CD8-positive, alpha-beta T cell (primary cell): ENCODE measurements at regions of chr2 and their contacts with region 1.

Region 1: DNA sequence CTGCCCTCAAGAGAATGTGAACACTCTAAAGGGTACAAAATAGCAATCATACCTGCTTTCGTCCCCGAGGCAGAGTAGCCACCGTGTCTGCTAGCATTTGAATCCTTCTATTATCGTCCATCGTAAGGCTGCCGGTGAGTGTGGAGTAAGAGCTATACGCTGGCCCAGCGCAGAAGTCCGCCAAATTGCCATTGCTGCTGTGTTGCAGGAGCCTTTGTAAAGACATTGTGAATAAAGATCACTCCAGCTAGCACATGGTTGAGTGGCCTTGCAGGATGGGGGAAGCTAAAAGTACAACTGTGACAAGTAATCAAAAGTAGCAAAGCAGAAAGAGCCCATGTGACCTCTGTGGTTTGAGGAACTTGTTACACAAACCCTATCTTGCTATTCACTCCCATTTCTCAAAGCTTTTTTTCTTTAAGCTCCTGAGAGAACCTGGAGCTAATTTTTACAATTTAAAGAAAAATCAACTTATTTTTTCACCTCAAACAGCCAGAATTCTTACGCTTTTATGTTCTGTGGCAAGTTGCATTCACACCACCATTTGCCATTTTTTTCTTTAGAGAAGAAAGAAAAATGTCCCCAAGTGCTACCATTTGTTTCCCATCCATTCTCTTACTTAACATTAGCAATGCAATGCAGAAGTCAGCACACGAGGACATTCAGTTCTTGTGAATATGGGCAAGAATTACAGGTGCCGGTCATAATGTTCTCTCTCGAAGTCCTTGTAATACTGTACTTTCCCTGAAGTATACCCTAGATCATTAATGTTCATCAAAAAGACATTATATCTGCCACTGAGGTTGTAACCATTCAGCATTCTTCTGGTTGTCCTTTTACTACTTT is at the start of gene CYTIP:
- DNase-seq: peak in 7 of 9 experiments; percentile 52 to 88 (median 64)
- ATAC-seq: peak; percentile 35
- H3K4me3 ChIP-seq: peak within 1 kb of the TSS; percentile 80 to 83
- H3K4me3 Mint-ChIP-seq: peak within 1 kb of the TSS; percentile 91
- H3K27ac ChIP-seq: peak within 1 kb of the TSS; percentile 88 to 92
- H3K27ac Mint-ChIP-seq: peak within 1 kb of the TSS; percentile 98
- H3K4me1 ChIP-seq: peaks cover 35% of the 10 kb centered on the region
- H3K4me1 Mint-ChIP-seq: peaks cover 46% of the 10 kb centered on the region
- H3K27me3 ChIP-seq: no peaks in the 10 kb centered on the region
- H3K27me3 Mint-ChIP-seq: no peaks in the 10 kb centered on the region
- CTCF ChIP-seq: no peak
- total RNA-seq, gene CYTIP: 425 to 430 TPM

Region 2: GRCh38 chr2:157363612-157364101 is 80.4 kb before region 1 on chr2:
- CTCF ChIA-PET with region 1: no interaction called
- POLR2A ChIA-PET with region 1: no interaction called
- intact Hi-C with region 1: no loop called
- DNase-seq: peak in 1 of 9 experiments; percentile 33
- ATAC-seq: no peak
- H3K4me3 ChIP-seq: no peak overlapping the region
- H3K4me3 Mint-ChIP-seq: peak overlapping the region; percentile 6
- H3K27ac ChIP-seq: peak overlapping the region in 1 of 2 experiments; percentile 34
- H3K27ac Mint-ChIP-seq: peak overlapping the region; percentile 29
- H3K4me1 ChIP-seq: peaks cover 29% of the 10 kb centered on the region
- H3K4me1 Mint-ChIP-seq: peaks cover 46% of the 10 kb centered on the region
- H3K27me3 ChIP-seq: no peaks in the 10 kb centered on the region
- H3K27me3 Mint-ChIP-seq: no peaks in the 10 kb centered on the region
- CTCF ChIP-seq: no peak

Region 3: GRCh38 chr2:157404363-157404762 is 39.7 kb before region 1 on chr2:
- CTCF ChIA-PET with region 1: interaction called, 15 read pairs
- POLR2A ChIA-PET with region 1: interaction called, 83 read pairs
- intact Hi-C with region 1: loop called (anchors 1 to 5 kb)
- DNase-seq: peak; percentile 56 to 92 (median 72)
- ATAC-seq: peak; percentile 92
- H3K4me3 ChIP-seq: no peak overlapping the region
- H3K4me3 Mint-ChIP-seq: peak overlapping the region; percentile 44
- H3K27ac ChIP-seq: peak overlapping the region; percentile 65 to 69
- H3K27ac Mint-ChIP-seq: peak overlapping the region; percentile 99
- H3K4me1 ChIP-seq: peaks cover 55% of the 10 kb centered on the region
- H3K4me1 Mint-ChIP-seq: peaks cover 69% of the 10 kb centered on the region
- H3K27me3 ChIP-seq: no peaks in the 10 kb centered on the region
- H3K27me3 Mint-ChIP-seq: no peaks in the 10 kb centered on the region
- CTCF ChIP-seq: no peak

Region 4: GRCh38 chr2:157420771-157421323 is 23.2 kb before region 1 on chr2:
- CTCF ChIA-PET with region 1: interaction called, 25 read pairs
- POLR2A ChIA-PET with region 1: interaction called, 97 read pairs
- intact Hi-C with region 1: loop called (anchors 1 kb)
- DNase-seq: peak in 2 of 9 experiments; percentile 52 to 72
- ATAC-seq: peak; percentile 19
- H3K4me3 ChIP-seq: no peak overlapping the region
- H3K4me3 Mint-ChIP-seq: peak overlapping the region; percentile 47
- H3K27ac ChIP-seq: peak overlapping the region; percentile 2 to 84
- H3K27ac Mint-ChIP-seq: peak overlapping the region; percentile 94
- H3K4me1 ChIP-seq: peaks cover 66% of the 10 kb centered on the region
- H3K4me1 Mint-ChIP-seq: peaks cover 73% of the 10 kb centered on the region
- H3K27me3 ChIP-seq: no peaks in the 10 kb centered on the region
- H3K27me3 Mint-ChIP-seq: no peaks in the 10 kb centered on the region
- CTCF ChIP-seq: no peak

Region 5: DNA sequence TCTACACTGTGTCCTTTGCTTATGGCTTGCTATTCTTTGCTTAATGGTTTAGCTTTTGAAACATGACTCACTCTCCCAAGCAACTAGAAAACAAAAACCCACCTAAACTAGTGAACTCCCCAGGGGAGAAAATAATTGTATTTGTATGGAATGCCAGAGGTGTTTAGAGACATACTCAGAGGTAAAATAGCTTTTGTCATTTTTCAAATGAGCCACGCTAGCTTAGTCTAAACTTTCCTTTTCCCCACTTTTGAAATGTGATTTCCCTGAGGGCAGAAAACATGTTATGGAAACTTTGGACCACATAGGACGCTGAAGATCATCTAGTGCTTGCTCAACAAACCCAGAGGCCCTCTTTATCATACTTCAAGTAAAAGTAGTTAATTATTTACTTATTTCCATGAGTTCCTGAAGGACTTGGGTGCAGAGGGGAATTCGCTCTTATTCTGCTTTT is 16.4 kb after region 1 on chr2:
- CTCF ChIA-PET with region 1: interaction called, 7 read pairs
- POLR2A ChIA-PET with region 1: interaction called, 7 read pairs
- intact Hi-C with region 1: loop called (anchors 1 kb)
- DNase-seq: no peak
- ATAC-seq: no peak
- H3K4me3 ChIP-seq: no peak overlapping the region
- H3K4me3 Mint-ChIP-seq: no peak overlapping the region
- H3K27ac ChIP-seq: no peak overlapping the region
- H3K27ac Mint-ChIP-seq: no peak overlapping the region
- H3K4me1 ChIP-seq: peaks cover 52% of the 10 kb centered on the region
- H3K4me1 Mint-ChIP-seq: peaks cover 64% of the 10 kb centered on the region
- H3K27me3 ChIP-seq: no peaks in the 10 kb centered on the region
- H3K27me3 Mint-ChIP-seq: no peaks in the 10 kb centered on the region
- CTCF ChIP-seq: no peak

Region 6: GRCh38 chr2:157628477-157629415 is 184.7 kb after region 1 on chr2 and contains the start of gene ACVR1C:
- CTCF ChIA-PET with region 1: interaction called, 3 read pairs
- POLR2A ChIA-PET with region 1: no interaction called
- intact Hi-C with region 1: loop called in 1 of 2 experiments (anchors 5 kb)
- DNase-seq: peak; percentile 32 to 89 (median 62)
- ATAC-seq: peak; percentile 81
- H3K4me3 ChIP-seq: peak within 1 kb of the TSS; percentile 65 to 81
- H3K4me3 Mint-ChIP-seq: peak within 1 kb of the TSS; percentile 96
- H3K27ac ChIP-seq: peak within 1 kb of the TSS in 1 of 2 experiments; percentile 42
- H3K27ac Mint-ChIP-seq: peak within 1 kb of the TSS; percentile 76
- H3K4me1 ChIP-seq: peaks cover 29% of the 10 kb centered on the region
- H3K4me1 Mint-ChIP-seq: peaks cover 37% of the 10 kb centered on the region
- H3K27me3 ChIP-seq: no peaks in the 10 kb centered on the region
- H3K27me3 Mint-ChIP-seq: no peaks in the 10 kb centered on the region
- CTCF ChIP-seq: peak; percentile 26
- total RNA-seq, gene ACVR1C: 2.3 to 2.4 TPM

Region 7: GRCh38 chr2:158456309-158457066 is 1012.5 kb after region 1 on chr2 and contains the starts of genes CCDC148 and PKP4:
- CTCF ChIA-PET with region 1: no interaction called
- POLR2A ChIA-PET with region 1: no interaction called
- intact Hi-C with region 1: loop called in 1 of 2 experiments (anchors 10 kb)
- DNase-seq: peak; percentile 74 to 97 (median 86)
- ATAC-seq: peak; percentile 91
- H3K4me3 ChIP-seq: peak within 1 kb of the TSS; percentile 69 to 81
- H3K4me3 Mint-ChIP-seq: peak within 1 kb of the TSS; percentile 96
- H3K27ac ChIP-seq: peak within 1 kb of the TSS; percentile 23 to 49
- H3K27ac Mint-ChIP-seq: peak within 1 kb of the TSS; percentile 76
- H3K4me1 ChIP-seq: peaks cover 12% of the 10 kb centered on the region
- H3K4me1 Mint-ChIP-seq: peaks cover 16% of the 10 kb centered on the region
- H3K27me3 ChIP-seq: no peaks in the 10 kb centered on the region
- H3K27me3 Mint-ChIP-seq: peaks cover 13% of the 10 kb centered on the region
- CTCF ChIP-seq: no peak
- total RNA-seq, gene CCDC148: not detected
- total RNA-seq, gene PKP4: 5.7 to 8.1 TPM